ENCODE measurements at regions of chr15 and their contacts with region 1.

Region 1: GRCh38 chr15:72217216-72217615 is 13.8 kb downstream of the PKM start:
- DNase-seq: no peak
- H3K4me3 ChIP-seq: no peak overlapping the region
- H3K27ac ChIP-seq: no peak overlapping the region
- H3K4me1 ChIP-seq: peaks cover under 1% of the 10 kb centered on the region
- H3K27me3 ChIP-seq: no peaks in the 10 kb centered on the region
- CTCF ChIP-seq: no peak
- EP300 ChIP-seq: no peak
- POLR2A ChIP-seq: no peak

Region 2: DNA sequence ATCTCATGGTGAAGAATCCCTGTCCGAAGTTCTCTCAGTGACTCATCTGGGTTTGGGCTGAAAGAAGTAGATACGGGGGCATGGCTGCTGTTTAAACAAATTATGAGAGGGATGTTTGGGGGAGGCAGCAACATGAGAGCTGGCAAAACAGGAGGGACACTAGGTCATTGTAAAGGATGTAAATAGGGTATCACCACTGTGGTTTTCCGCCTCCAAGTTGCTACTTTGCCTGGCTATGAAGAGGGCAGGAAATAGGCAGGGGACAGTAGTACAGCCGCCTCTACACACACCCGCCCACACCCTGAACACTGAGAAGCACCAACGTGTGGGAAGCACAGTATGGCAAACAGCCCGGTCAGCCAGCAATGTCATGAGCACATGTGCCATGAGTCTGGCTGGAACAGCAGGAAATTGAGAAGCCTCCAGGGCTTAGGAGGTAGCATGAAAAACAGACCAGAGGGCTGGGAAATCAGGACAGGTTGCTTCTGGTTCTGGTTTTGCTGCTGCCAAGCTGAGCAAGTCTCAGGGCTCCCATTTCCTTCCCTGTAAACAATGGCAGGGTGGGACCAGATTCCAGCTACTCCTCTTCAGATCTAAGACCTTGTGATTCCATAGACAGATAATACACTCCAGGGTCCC is 141.6 kb after region 1 on chr15:
- intact Hi-C with region 1: loop called in 1 of 4 experiments (anchors 10 kb)
- DNase-seq: no peak
- H3K4me3 ChIP-seq: no peak overlapping the region
- H3K27ac ChIP-seq: no peak overlapping the region
- H3K4me1 ChIP-seq: peaks cover 4% of the 10 kb centered on the region
- H3K27me3 ChIP-seq: no peaks in the 10 kb centered on the region
- CTCF ChIP-seq: no peak
- EP300 ChIP-seq: no peak
- POLR2A ChIP-seq: no peak